A549 (cell line): ENCODE measurements at regions of chr1 and their contacts with region 1.

Region 1: DNA sequence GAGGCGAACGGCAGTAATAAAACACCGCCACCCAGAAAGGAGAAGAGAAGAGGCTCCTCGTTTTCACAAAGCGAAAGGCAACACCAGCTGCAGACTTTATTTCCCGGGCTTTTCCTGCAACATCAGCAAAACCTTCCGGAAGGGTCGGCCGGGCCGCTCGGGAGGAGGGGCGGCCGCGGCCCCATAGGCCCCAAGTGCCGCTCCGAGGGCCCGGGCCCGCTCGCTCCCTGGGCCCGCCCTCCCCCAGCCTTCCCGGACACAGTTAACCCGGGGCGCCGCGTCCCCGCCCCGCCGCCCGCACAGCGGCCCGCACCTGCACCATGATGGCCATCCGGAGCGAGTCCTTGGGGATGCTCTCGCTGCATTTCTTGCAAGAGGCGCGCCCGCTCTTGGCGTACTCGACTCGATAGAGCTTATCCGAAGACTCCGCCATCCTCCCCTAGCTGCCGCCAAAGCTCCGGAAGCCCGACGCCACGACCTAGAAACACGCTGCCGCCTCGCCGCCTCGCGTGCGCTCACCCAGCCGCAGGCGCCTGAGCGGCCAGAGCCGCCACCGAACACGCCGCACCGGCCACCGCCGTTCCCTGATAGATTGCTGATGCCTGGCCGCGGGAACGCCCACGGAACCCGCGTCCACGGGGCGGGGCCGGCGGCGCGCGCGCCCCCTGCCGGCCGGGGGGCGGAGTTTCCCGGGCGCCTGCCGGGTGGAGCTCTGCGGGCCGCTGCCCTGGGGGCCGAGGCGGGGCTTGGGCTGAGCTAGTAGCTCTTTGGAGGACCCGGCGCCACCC is at the start of gene PARP1:
- DNase-seq: peak; percentile 84 to 89
- ATAC-seq: peak; percentile 84 to 89
- H3K4me3 ChIP-seq: peak within 1 kb of the TSS; percentile 67
- H3K27ac ChIP-seq: peak within 1 kb of the TSS; percentile 74 to 95
- H3K4me1 ChIP-seq: peaks cover 31% of the 10 kb centered on the region
- CTCF ChIP-seq: peak; percentile 87
- EP300 ChIP-seq: no peak
- POLR2A ChIP-seq: peak; percentile 83
- RAD21 ChIP-seq: no peak
- polyA plus RNA-seq, gene PARP1: 134 and 144 TPM in 2 replicates

Region 2: DNA sequence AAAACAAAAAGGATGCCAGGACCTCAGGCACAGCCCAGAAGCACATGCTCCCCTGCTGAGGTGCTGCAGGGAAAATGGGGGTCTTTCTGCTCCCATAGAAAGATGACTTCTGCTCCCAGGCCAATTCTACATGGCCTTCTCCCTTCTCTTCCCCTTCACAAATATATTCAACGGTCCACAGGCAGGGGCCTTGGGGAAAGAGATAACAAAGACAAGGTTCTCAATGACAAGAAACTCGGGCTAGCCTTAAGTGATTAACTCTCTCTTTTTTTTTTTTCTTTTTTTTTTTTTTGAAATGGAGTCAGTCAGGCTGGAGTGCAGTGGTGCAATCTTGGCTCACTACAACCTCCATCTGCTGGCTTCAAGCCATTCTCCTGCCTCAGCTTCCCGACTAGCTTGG is 291.0 kb before region 1 on chr1:
- CTCF ChIA-PET with region 1: no interaction called
- POLR2A ChIA-PET with region 1: no interaction called
- DNase-seq: no peak
- ATAC-seq: no peak
- H3K4me3 ChIP-seq: no peak overlapping the region
- H3K27ac ChIP-seq: no peak overlapping the region
- H3K4me1 ChIP-seq: peaks cover 3% of the 10 kb centered on the region; the same call in 1 of the 3 replicates
- CTCF ChIP-seq: no peak
- EP300 ChIP-seq: no peak
- POLR2A ChIP-seq: no peak
- RAD21 ChIP-seq: no peak

Region 3: DNA sequence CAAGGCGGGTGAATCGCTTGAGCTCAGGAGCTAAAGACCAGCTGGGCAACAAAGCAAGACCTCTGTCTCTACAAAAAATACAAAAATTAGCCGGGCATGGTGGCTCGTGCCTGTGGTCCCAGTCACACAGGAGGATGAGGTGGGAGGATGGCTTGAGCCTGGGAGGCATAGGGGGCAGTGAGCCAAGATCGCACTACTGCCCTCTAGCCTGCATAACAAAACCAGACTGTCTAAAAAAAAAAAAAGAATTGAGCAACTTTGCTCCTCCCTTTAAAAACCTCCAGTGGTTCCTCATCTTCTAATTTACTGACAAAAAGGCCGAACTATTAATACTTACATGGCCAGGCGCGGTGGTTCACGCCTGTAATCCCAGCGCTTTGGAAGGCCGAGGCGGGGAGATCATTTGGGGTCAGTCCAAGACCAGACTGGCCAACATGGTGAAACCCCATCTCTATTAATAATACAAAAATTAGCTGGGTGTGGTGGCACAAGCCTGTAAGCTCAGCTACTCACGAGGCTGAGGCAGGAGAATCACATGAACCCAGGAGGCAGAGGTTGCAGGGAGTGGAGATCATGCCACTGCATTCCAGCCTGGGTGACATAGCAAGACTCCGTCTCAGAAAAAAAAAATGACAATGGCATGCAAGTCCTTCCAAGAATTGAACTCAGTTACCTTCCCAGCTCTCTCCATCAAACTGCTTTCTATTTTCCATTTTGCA is 225.5 kb before region 1 on chr1:
- CTCF ChIA-PET with region 1: no interaction called
- POLR2A ChIA-PET with region 1: no interaction called
- DNase-seq: peak; percentile 50 to 69
- ATAC-seq: peak in 1 of 2 experiments; percentile 62; a peak in 3 of 6 replicates
- H3K4me3 ChIP-seq: no peak overlapping the region
- H3K27ac ChIP-seq: peak overlapping the region; percentile 8 to 78; a peak in 4 of 6 replicates
- H3K4me1 ChIP-seq: peaks cover 35% of the 10 kb centered on the region
- CTCF ChIP-seq: peak; percentile 70
- EP300 ChIP-seq: no peak
- POLR2A ChIP-seq: no peak
- RAD21 ChIP-seq: peak; percentile 20 to 24; a peak in 1 of 5 replicates

Region 4: GRCh38 chr1:226279498-226279897 is 128.2 kb before region 1 on chr1:
- CTCF ChIA-PET with region 1: no interaction called
- POLR2A ChIA-PET with region 1: no interaction called
- DNase-seq: no peak
- ATAC-seq: no peak
- H3K4me3 ChIP-seq: no peak overlapping the region
- H3K27ac ChIP-seq: no peak overlapping the region
- H3K4me1 ChIP-seq: no peaks in the 10 kb centered on the region
- CTCF ChIP-seq: no peak
- EP300 ChIP-seq: no peak
- POLR2A ChIP-seq: no peak
- RAD21 ChIP-seq: no peak

Region 5: GRCh38 chr1:226382030-226382429 is 25.7 kb before region 1 on chr1:
- CTCF ChIA-PET with region 1: interaction called, 16 read pairs
- POLR2A ChIA-PET with region 1: no interaction called
- DNase-seq: no peak
- ATAC-seq: no peak
- H3K4me3 ChIP-seq: no peak overlapping the region
- H3K27ac ChIP-seq: no peak overlapping the region
- H3K4me1 ChIP-seq: no peaks in the 10 kb centered on the region
- CTCF ChIP-seq: no peak
- EP300 ChIP-seq: no peak
- POLR2A ChIP-seq: no peak
- RAD21 ChIP-seq: no peak

Region 6: GRCh38 chr1:226394462-226394861 is 13.2 kb before region 1 on chr1:
- CTCF ChIA-PET with region 1: interaction called, 11 read pairs
- POLR2A ChIA-PET with region 1: interaction called, 3 read pairs
- DNase-seq: no peak
- ATAC-seq: no peak
- H3K4me3 ChIP-seq: no peak overlapping the region
- H3K27ac ChIP-seq: no peak overlapping the region
- H3K4me1 ChIP-seq: no peaks in the 10 kb centered on the region
- CTCF ChIP-seq: no peak
- EP300 ChIP-seq: no peak
- POLR2A ChIP-seq: no peak
- RAD21 ChIP-seq: no peak

Region 7: DNA sequence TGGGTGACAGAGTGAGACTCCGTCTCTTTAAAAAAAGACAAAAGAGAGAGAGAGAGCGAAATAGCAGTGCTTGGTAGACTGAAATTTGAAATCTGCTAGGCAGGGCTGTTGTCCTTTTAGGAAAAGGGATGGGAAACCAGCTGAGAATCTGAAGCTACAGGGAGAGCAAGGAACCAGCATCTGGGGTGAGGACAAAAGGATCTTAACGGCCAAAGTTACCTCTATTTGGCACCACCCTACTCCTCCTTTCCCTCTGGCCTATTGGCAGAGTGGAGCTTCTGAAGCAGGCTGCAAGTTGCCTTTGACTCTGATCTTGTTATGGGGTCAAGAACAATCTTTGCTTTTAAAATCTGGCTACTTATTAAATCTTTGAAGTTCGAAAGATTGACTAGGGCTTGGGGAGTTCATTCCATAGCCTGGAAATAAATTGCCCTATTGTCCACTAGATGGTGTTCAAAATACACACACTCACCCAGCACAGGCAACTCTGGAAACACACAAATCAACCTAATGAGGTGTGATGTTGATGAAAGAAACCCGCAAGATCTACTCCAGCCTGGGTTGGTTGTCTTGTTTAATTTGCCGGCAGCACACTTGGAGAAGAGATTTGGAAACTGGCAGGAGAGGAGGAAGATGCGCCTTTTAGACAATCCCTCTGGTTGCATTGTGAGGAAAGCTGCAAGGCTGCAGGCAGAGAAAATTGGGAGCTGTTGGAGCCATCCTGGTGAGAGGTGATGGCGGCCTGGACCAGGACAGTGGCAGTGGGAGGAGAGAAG is 16.7 kb after region 1 on chr1:
- CTCF ChIA-PET with region 1: interaction called, 38 read pairs
- POLR2A ChIA-PET with region 1: interaction called, 3 read pairs
- DNase-seq: peak; percentile 42 to 49
- ATAC-seq: peak; percentile 83 to 91; a peak in 5 of 6 replicates
- H3K4me3 ChIP-seq: no peak overlapping the region
- H3K27ac ChIP-seq: no peak overlapping the region
- H3K4me1 ChIP-seq: no peaks in the 10 kb centered on the region
- CTCF ChIP-seq: peak; percentile 68
- EP300 ChIP-seq: no peak
- POLR2A ChIP-seq: no peak
- RAD21 ChIP-seq: peak; percentile 71 to 73

Region 8: DNA sequence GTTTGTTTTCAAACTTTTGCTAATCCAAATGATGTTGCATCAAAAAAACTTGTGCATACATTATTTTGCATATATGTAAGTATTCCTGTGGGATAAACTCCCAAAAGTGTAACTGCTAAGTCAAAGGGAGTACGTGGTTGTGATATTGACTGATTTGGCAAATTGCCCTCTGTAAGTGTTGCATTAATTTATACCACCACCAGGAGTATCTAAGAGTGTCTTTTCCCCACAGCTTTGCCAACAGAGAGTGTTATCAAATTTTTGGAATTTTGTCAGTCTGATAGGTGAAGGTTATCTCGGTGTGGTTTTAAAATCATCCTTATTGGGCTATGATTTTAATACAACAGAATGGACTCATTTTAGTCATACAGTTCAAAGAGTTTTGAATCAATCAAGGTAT is 30.3 kb after region 1 on chr1:
- CTCF ChIA-PET with region 1: interaction called, 10 read pairs
- POLR2A ChIA-PET with region 1: no interaction called
- DNase-seq: peak in 1 of 2 experiments; percentile 36
- ATAC-seq: peak in 1 of 2 experiments; percentile 69; a peak in 3 of 6 replicates
- H3K4me3 ChIP-seq: no peak overlapping the region
- H3K27ac ChIP-seq: no peak overlapping the region
- H3K4me1 ChIP-seq: no peaks in the 10 kb centered on the region
- CTCF ChIP-seq: no peak
- EP300 ChIP-seq: no peak
- POLR2A ChIP-seq: no peak
- RAD21 ChIP-seq: no peak